ENCODE measurements at regions of chr3 and their contacts with region 1.

Region 1: DNA sequence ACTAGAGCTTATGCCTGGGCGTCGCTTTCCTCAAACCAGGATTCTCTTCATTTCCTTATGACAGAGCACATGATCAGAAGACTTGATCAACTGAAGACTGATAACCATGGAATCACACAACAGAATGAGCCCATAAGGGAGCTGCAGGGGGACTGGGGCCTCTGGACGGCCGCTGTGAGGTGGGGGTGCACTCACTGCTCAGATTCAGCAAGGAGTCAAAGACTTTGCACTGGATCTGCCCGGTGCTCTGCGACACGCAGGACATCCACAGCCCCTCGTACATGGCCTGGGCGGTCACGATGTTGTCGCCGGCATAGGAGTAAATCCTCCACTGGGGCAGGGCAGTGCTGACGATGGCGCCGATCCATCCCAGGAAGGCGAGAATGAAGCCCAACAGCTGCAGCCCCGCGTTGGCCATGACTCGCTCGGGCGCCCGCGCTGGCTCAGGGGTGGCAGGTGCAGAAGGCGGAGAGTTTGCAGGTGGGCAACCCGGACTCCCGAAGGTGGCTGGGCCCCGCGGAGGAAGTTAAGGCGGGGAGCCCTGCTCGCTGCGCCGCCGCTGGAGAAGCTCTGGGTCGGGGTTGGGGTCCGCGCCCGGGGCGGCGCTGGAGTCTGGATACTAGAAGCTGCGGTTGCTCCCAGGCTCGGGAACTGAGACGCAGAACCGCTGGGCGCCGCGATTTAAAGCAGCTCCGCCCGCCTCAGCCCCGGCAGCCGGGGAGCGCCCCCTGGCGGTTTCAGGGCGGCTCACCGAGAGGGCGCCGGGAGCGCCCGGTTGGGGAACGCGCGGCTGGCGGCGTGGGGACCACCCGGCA is at the start of gene CLDN1:
- DNase-seq: peak; percentile 68
- H3K4me3 Mint-ChIP-seq: peak within 1 kb of the TSS; percentile 51
- H3K27ac Mint-ChIP-seq: no peak within 1 kb of the TSS
- H3K4me1 Mint-ChIP-seq: peaks cover 12% of the 10 kb centered on the region
- H3K27me3 Mint-ChIP-seq: peaks cover 36% of the 10 kb centered on the region
- total RNA-seq, gene CLDN1: not detected

Region 2: GRCh38 chr3:190252080-190252479 is 69.9 kb before region 1 on chr3:
- CTCF ChIA-PET with region 1: no interaction called
- POLR2A ChIA-PET with region 1: no interaction called
- DNase-seq: no peak
- H3K4me3 Mint-ChIP-seq: no peak overlapping the region
- H3K27ac Mint-ChIP-seq: no peak overlapping the region
- H3K4me1 Mint-ChIP-seq: no peaks in the 10 kb centered on the region
- H3K27me3 Mint-ChIP-seq: no peaks in the 10 kb centered on the region

Region 3: DNA sequence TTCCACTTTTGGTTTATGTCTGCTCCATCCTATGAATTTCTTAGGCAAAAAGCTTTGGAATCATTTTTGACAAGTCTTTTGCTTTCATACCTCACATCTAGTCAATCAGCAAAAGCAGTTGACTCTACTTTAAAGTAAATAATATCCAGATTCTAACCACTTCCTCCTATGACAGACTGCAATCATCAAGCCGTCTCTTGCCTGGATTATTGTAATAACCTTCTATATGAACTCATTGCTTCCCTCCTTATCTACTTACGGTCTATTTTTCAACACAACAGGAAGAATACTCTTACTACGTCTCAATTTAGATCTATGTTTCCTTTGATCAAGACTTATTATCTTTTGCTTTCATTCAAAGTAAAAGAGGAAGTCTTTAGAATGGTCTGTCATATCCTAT is 20.4 kb before region 1 on chr3:
- CTCF ChIA-PET with region 1: interaction called, 12 read pairs
- POLR2A ChIA-PET with region 1: no interaction called
- DNase-seq: no peak
- H3K4me3 Mint-ChIP-seq: no peak overlapping the region
- H3K27ac Mint-ChIP-seq: no peak overlapping the region
- H3K4me1 Mint-ChIP-seq: peaks cover 6% of the 10 kb centered on the region
- H3K27me3 Mint-ChIP-seq: no peaks in the 10 kb centered on the region

Region 4: GRCh38 chr3:190345027-190345821 is 23.2 kb after region 1 on chr3:
- CTCF ChIA-PET with region 1: interaction called, 10 read pairs
- POLR2A ChIA-PET with region 1: no interaction called
- DNase-seq: no peak
- H3K4me3 Mint-ChIP-seq: no peak overlapping the region
- H3K27ac Mint-ChIP-seq: no peak overlapping the region
- H3K4me1 Mint-ChIP-seq: no peaks in the 10 kb centered on the region
- H3K27me3 Mint-ChIP-seq: peaks cover 8% of the 10 kb centered on the region